A549 (cell line): ENCODE measurements at regions of chr9 and their contacts with region 1.

Region 1: DNA sequence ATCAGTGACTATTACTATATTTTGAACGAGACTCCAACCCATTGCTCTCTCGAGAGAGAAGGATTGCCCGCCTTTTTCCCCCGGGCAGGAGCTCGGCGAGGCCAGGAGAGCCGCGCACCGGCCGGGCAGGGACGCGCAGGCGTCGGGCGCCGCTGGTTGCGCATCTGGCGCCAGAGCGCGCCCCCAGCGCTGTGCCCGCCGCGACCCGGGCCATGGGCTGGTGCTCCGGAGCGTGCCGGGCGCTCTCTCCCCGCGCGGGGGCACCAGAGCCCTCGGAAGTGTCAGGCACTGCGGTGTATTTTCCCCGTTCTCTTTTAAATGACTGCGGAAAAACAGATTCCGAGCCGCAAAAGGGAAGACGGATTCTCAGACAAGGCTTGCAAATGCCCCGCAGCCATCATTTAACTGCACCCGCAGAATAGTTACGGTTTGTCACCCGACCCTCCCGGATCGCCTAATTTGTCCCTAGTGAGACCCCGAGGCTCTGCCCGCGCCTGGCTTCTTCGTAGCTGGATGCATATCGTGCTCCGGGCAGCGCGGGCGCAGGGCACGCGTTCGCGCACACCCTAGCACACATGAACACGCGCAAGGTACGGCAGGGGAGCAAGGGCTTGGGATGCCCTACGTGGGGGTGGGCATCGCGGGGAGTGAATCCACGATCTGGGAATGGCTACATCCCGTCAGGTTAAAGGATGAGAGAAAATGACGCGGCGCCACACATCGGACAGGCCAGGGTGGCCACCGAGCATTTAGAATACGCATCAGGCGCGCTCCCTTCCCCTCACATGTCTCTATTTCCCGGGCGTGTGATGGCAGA is 1.1 kb upstream of the NTRK2 start:
- DNase-seq: peak; percentile 67 to 72
- ATAC-seq: peak; percentile 93 to 97
- H3K4me3 ChIP-seq: peak overlapping the region; percentile 45
- H3K27ac ChIP-seq: no peak overlapping the region
- H3K4me1 ChIP-seq: peaks cover 22% of the 10 kb centered on the region; the same call in 2 of the 3 replicates
- CTCF ChIP-seq: peak; percentile 65
- EP300 ChIP-seq: no peak
- POLR2A ChIP-seq: no peak
- RAD21 ChIP-seq: peak; percentile 51 to 74; a peak in 4 of 5 replicates

Region 2: GRCh38 chr9:84339962-84340361 is 328.4 kb before region 1 on chr9:
- CTCF ChIA-PET with region 1: no interaction called
- POLR2A ChIA-PET with region 1: no interaction called
- DNase-seq: no peak
- ATAC-seq: no peak
- H3K4me3 ChIP-seq: no peak overlapping the region
- H3K27ac ChIP-seq: no peak overlapping the region
- H3K4me1 ChIP-seq: no peaks in the 10 kb centered on the region
- CTCF ChIP-seq: no peak
- EP300 ChIP-seq: no peak
- POLR2A ChIP-seq: no peak
- RAD21 ChIP-seq: no peak

Region 3: DNA sequence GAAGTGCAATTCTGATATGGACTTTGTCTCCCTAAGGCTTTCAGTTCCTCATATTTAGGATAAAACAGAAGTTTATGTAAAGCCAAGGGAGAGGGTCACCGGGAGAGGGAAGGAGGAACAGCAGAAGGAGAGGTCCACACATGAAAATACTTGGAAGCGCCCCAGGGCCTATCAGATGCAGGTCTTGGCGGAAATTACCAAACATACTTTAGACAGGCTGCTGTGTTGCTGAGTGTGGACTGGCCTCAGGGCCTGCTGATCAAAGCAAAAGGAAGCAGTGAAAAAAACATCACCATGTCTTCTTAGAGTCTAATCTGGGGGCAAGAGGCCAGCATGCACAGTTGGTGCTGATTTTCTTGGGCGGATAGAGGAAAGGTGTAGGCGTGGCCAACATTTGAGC is 13.0 kb before region 1 on chr9:
- CTCF ChIA-PET with region 1: interaction called, 13 read pairs
- POLR2A ChIA-PET with region 1: no interaction called
- DNase-seq: no peak
- ATAC-seq: no peak
- H3K4me3 ChIP-seq: no peak overlapping the region
- H3K27ac ChIP-seq: no peak overlapping the region
- H3K4me1 ChIP-seq: no peaks in the 10 kb centered on the region
- CTCF ChIP-seq: no peak
- EP300 ChIP-seq: no peak
- POLR2A ChIP-seq: no peak
- RAD21 ChIP-seq: no peak

Region 4: DNA sequence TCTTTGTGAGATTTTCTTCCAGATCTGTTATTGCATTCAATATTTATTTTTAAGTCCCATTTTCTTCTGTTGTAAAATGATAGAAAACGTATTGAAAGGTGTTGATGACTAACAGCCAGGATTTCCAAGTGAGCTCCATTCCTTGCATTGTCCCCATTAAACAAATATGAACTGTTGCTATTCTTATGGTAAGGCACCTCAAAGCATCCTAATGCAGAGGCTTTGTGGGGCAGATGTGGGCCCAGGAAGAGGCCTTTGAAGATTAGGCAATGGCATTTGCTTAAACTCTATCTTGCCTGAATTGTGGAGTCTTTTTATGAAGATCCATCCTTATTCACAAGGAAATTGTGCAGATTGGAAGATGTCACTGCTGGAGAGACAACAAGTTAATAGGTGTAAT is 40.0 kb after region 1 on chr9:
- CTCF ChIA-PET with region 1: no interaction called
- POLR2A ChIA-PET with region 1: no interaction called
- DNase-seq: no peak
- ATAC-seq: no peak
- H3K4me3 ChIP-seq: no peak overlapping the region
- H3K27ac ChIP-seq: no peak overlapping the region
- H3K4me1 ChIP-seq: no peaks in the 10 kb centered on the region
- CTCF ChIP-seq: no peak
- EP300 ChIP-seq: no peak
- POLR2A ChIP-seq: no peak
- RAD21 ChIP-seq: no peak

Region 5: DNA sequence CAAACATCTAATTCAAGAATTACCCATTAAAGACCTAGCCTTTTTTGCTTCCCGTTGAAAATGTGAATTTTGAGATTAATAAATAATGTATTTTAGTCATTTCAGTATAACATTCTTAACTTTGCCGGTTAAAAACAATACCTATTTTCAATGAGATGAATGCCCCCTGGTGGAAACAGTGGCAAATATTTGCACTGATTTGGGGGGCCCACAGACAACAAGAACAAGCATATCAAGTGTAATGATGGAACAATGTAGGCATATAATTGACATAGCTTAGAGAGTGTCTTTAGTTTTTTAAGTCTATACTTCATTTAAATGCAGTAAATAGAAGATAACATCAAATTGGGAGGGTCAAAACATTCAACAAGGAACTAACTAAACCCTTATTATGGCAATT is 113.1 kb after region 1 on chr9:
- CTCF ChIA-PET with region 1: interaction called, 11 read pairs
- POLR2A ChIA-PET with region 1: no interaction called
- DNase-seq: peak in 1 of 2 experiments; percentile 7
- ATAC-seq: peak in 1 of 2 experiments; percentile 28; a peak in 1 of 6 replicates
- H3K4me3 ChIP-seq: no peak overlapping the region
- H3K27ac ChIP-seq: no peak overlapping the region
- H3K4me1 ChIP-seq: no peaks in the 10 kb centered on the region
- CTCF ChIP-seq: peak; percentile 35; the same call in 2 of the 3 replicates
- EP300 ChIP-seq: no peak
- POLR2A ChIP-seq: no peak
- RAD21 ChIP-seq: peak in 1 of 2 experiments; percentile 46; a peak in 2 of 5 replicates

Region 6: DNA sequence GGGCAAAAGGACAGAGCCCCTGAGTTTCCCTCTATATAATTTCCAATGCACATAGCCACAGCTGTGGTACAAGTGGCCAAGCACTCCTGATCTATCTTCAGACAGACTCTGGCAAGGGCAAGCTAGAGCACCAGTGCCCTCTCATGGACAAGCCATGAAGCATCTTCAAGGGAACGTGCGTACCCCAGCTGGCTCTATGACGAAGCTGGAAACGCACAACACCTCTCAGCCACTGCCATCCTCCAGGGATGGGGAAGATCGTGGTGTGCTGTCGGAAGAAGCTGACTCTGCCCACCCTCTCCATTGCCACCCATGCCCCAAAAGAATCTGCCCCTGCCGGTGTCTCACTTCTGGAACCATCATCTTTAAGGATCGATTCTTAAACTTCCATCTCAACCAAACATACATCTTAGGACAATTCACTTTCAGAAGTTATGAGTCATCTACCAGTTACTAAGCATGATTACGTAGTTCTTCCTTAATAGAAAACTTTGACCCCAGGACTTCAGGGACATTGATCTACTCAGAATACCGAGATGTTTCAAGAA is 590.5 kb after region 1 on chr9:
- CTCF ChIA-PET with region 1: interaction called, 17 read pairs
- POLR2A ChIA-PET with region 1: no interaction called
- DNase-seq: peak; percentile 60 to 74
- ATAC-seq: peak; percentile 95 to 98
- H3K4me3 ChIP-seq: no peak overlapping the region
- H3K27ac ChIP-seq: no peak overlapping the region
- H3K4me1 ChIP-seq: no peaks in the 10 kb centered on the region
- CTCF ChIP-seq: peak; percentile 44
- EP300 ChIP-seq: no peak
- POLR2A ChIP-seq: no peak
- RAD21 ChIP-seq: peak; percentile 71 to 88